Heart left ventricle (tissue), 16 donors: ENCODE measurements at regions of chr17 and their contacts with region 1.

Region 1: DNA sequence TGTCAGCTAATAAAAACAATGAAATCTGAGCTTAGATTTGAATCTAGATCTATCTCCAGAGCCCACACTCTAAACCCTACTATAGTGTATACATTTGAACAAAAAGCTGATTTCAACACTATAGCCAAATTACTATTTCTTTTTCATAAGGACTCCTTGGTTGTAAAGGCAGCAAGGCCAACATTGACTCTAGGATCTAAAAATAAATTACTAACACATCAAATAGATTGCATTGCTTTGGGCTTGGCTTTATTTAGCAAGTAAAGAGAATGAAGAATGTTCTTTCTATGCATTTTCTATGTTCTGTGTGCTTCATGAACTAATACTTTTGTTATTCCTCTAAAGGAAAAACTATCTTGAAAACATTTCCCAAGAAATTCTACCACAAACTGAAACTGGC is 5.3 kb downstream of the GOSR1 start:
- DNase-seq: no peak
- ATAC-seq: peak in 1 of 4 donors; percentile 66
- H3K4me3 ChIP-seq: no peak overlapping the region
- H3K27ac ChIP-seq: peak overlapping the region in 7 of 12 donors; percentile 4 to 69 (median 15)
- H3K4me1 ChIP-seq: peaks cover 0 to 23% (median 14%) of the 10 kb centered on the region in 12 donors
- H3K27me3 ChIP-seq: no peaks in the 10 kb centered on the region
- CTCF ChIP-seq: no peak
- POLR2A ChIP-seq: no peak

Region 2: DNA sequence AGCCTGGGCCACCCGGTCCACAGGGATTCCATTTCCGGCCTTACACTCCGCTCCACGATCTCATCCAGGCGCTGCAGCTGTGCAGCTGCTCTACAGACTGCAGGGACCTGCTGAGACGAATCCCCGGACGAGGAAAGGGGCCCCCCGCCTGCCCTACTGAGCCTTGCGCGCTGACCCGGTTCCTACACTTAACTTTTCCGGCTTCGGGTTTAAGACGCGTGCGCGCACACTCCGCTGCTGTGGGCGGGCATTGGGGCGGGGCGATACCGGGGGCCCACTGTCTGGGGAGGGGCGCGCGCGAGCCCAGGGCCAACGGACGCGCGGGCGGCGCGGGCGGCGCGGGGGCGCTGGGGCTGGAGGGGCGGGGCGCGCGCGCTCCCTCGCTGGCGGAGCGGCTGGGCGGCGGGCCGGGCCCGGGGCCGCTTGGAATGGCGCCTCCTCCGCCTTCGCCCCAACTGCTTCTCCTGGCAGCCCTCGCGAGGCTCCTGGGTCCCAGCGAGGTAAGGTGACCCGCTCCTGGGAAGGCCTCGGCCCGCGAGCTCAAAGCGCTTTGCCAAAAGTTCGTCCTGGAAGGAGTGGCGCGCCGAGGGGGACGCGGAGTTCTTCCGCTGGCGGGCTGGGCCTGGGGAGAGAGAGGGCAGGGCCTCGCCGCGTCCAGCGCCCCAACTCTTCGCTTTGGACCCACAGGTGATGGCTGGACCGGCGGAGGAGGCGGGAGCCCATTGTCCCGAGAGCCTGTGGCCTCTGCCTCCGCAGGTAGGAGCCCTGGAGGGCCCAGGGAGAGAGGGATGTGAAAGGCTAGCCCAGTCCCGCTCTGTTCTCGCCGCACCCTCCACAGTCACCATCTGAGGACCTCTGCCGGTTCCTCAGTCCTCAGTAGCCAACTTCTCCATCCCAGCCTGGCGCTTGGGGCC is 914.0 kb before region 1 on chr17 and contains the start of gene TP53I13:
- intact Hi-C with region 1: loop called in 1 of 10 experiments (anchors 10 kb)
- DNase-seq: peak; percentile 88 to 94 (median 92)
- ATAC-seq: peak; percentile 63 to 83 (median 72)
- H3K4me3 ChIP-seq: peak within 1 kb of the TSS; percentile 66 to 86 (median 81)
- H3K27ac ChIP-seq: peak within 1 kb of the TSS; percentile 66 to 93 (median 88)
- H3K4me1 ChIP-seq: peaks cover 5 to 71% (median 41%) of the 10 kb centered on the region in 12 donors
- H3K27me3 ChIP-seq: no peaks in the 10 kb centered on the region
- CTCF ChIP-seq: no peak
- POLR2A ChIP-seq: peak in 1 of 2 donors; percentile 83
- total RNA-seq, gene TP53I13: 23.8 to 65.5 (median 38.3) TPM

Region 3: DNA sequence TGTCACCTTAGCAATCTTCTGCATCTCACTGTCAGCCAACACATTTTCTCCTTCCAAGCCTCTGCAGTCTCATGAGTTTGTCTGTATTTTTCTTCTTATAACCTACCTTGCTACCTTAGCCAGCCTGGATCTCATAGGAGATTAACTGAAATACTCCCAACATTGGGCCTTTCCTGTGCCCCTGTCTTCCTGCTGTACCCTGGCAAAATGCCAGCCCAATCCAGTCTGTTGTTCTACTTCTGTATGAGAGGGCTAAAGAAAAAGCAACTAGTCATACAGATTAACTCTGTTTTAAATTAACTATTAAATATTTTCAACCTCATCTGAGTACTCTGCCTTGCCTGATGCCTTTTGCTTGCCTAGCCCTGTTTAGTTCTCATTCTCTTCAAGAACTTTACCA is 13.0 kb after region 1 on chr17:
- intact Hi-C with region 1: loop called in 1 of 10 experiments (anchors 2 kb)
- DNase-seq: no peak
- ATAC-seq: no peak
- H3K4me3 ChIP-seq: no peak overlapping the region
- H3K27ac ChIP-seq: no peak overlapping the region
- H3K4me1 ChIP-seq: peaks cover 0 to 4% (median 0%) of the 10 kb centered on the region in 12 donors
- H3K27me3 ChIP-seq: no peaks in the 10 kb centered on the region
- CTCF ChIP-seq: no peak
- POLR2A ChIP-seq: no peak

Region 4: DNA sequence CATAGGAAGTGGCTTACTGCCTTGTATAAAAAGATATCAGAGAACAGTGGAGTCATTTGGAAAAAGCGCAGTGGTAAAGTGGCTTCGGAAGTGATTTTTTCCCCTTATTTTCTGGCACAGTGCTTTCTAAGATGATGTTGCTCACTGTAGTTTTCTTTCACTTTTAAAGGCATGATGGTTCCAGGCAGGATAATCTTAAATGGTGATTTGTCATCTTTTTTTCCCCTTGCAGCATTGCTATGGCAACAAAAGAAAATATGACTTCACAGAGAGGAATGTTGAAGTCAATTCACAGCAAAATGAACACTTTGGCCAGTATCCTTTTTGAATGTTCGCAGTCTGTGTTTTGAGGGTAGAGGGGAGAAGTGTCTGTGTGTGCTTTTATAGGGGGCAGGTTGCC is 37.2 kb after region 1 on chr17:
- intact Hi-C with region 1: loop called in 1 of 10 experiments (anchors 5 kb)
- DNase-seq: no peak
- ATAC-seq: peak in 3 of 4 donors; percentile 27 to 80 (median 71)
- H3K4me3 ChIP-seq: peak overlapping the region in 1 of 12 donors; percentile 24
- H3K27ac ChIP-seq: peak overlapping the region in 7 of 12 donors; percentile 23 to 61 (median 31)
- H3K4me1 ChIP-seq: peaks cover 0 to 26% (median 11%) of the 10 kb centered on the region in 12 donors
- H3K27me3 ChIP-seq: no peaks in the 10 kb centered on the region
- CTCF ChIP-seq: no peak
- POLR2A ChIP-seq: no peak

Region 5: DNA sequence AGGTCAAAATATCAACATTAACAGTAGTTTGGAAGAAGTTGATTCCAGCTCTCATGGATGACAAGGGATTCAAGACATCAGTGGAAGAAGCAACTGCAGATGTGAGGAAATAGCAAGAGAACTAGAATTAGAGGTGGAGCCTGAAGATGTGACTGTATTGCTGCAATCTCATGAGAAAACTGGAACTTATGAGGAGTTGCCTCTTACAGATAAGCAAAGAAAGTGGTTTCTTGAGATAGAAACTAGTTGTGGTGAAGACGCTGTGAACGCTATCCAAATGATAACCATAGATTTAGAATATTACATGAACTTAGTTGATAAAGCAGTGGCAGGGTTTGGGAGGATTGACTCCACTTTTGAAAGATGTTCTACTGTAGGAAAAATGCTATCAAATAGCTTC is 62.5 kb after region 1 on chr17:
- intact Hi-C with region 1: no loop called
- DNase-seq: no peak
- ATAC-seq: no peak
- H3K4me3 ChIP-seq: no peak overlapping the region
- H3K27ac ChIP-seq: no peak overlapping the region
- H3K4me1 ChIP-seq: no peaks in the 10 kb centered on the region
- H3K27me3 ChIP-seq: no peaks in the 10 kb centered on the region
- CTCF ChIP-seq: no peak
- POLR2A ChIP-seq: no peak

Region 6: DNA sequence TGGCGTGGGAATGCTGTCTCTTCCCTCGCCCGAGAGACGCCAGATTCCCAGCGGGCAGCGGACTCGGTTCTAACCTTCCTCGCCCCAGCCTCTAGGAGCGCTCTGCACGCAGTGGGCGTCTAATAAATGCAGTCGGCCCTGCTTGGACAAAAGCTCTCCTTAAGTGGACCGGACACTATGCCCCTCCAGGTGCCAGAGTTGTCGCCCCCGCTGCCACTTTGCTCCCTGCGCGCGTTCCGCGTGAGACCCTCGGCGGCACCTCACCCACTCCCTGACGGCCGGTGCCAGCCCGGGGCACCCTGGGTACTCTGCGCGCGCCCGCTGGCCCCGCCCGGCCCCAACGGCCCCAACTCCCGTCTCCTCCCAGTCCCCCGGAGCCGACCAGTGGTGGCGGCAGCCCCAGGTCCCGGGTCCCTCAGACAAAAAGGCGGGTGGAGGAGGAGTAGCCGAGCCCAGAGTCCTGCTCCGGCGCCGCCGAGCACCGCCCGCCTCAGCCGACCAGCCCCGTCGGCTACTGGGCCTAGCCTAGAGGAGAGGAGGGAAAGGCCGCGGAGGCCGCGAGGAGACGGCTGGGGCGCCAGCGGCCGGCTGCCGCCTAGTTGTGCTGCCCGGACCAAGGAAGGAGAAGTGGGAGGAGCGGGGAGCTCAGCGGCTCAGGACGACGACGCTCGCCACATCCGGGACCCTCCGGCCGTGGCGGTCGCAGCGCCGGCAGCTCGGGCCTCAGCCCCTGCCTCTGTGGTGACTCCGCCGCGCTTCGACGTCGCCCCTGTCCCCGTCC is 117.7 kb after region 1 on chr17:
- intact Hi-C with region 1: loop called in 4 of 10 experiments (anchors 2 to 10 kb)
- DNase-seq: peak; percentile 84 to 91 (median 88)
- ATAC-seq: peak; percentile 95 to 99 (median 99)
- H3K4me3 ChIP-seq: peak overlapping the region; percentile 72 to 95 (median 84)
- H3K27ac ChIP-seq: peak overlapping the region; percentile 81 to 99 (median 96)
- H3K4me1 ChIP-seq: peaks cover 0 to 18% (median 6%) of the 10 kb centered on the region in 12 donors
- H3K27me3 ChIP-seq: no peaks in the 10 kb centered on the region
- CTCF ChIP-seq: peak in 11 of 12 donors; percentile 18 to 62 (median 40)
- POLR2A ChIP-seq: peak in 1 of 2 donors; percentile 73